ENCODE measurements at regions of chr6 and their contacts with region 1.

Region 1: GRCh38 chr6:118893807-118894424 is at the start of gene ASF1A:
- DNase-seq: peak; percentile 97
- ATAC-seq: peak; percentile 85
- H3K4me3 Mint-ChIP-seq: peak within 1 kb of the TSS; percentile 84
- H3K27ac Mint-ChIP-seq: peak within 1 kb of the TSS; percentile 98
- H3K4me1 Mint-ChIP-seq: peaks cover 50% of the 10 kb centered on the region
- H3K27me3 Mint-ChIP-seq: no peaks in the 10 kb centered on the region
- total RNA-seq, gene ASF1A: 21.2 to 28.6 TPM

Region 2: GRCh38 chr6:117602151-117602898 is 1291.6 kb before region 1 on chr6 and contains the start of gene GOPC:
- CTCF ChIA-PET with region 1: no interaction called
- POLR2A ChIA-PET with region 1: no interaction called
- intact Hi-C with region 1: loop called in 1 of 2 experiments (anchors 5 kb)
- DNase-seq: peak; percentile 96
- ATAC-seq: peak; percentile 94
- H3K4me3 Mint-ChIP-seq: peak within 1 kb of the TSS; percentile 99
- H3K27ac Mint-ChIP-seq: peak within 1 kb of the TSS; percentile 99
- H3K4me1 Mint-ChIP-seq: peaks cover 30% of the 10 kb centered on the region
- H3K27me3 Mint-ChIP-seq: peaks cover 2% of the 10 kb centered on the region
- total RNA-seq, gene GOPC: 13.3 to 15.5 TPM

Region 3: DNA sequence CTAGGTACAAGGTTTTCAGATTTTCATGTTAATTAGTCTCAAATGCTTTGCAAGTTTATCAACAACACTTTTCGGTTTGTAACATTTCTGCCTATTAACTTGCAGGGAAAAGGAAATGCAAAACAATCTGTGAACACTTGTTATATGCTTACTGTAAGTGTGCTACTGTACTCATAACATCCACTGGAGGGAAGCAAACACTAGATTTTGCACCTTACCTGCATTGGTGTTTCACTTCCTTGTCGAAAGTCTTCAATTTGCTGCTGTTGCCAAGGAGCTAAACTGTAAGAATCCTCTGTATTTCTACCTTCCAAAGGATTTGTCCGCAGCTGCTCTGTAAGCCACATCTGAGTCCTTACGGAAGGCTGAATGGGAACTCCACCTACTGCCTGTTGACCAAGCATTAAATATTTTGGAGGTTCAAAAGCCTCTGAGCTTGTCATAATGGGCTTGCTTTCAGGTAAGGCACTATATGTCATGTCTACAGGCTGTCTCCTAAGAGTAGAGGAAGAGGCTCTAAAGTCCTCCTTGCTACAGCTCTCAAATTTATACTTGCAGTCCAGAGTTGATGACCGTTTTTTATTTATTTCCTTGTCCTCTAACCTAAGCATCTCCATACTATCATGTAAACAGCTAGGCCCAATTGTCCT is 328.5 kb before region 1 on chr6:
- CTCF ChIA-PET with region 1: interaction called, 4 read pairs
- POLR2A ChIA-PET with region 1: no interaction called
- intact Hi-C with region 1: loop called (anchors 5 to 10 kb)
- DNase-seq: no peak
- ATAC-seq: peak; percentile 92
- H3K4me3 Mint-ChIP-seq: no peak overlapping the region
- H3K27ac Mint-ChIP-seq: no peak overlapping the region
- H3K4me1 Mint-ChIP-seq: peaks cover 20% of the 10 kb centered on the region
- H3K27me3 Mint-ChIP-seq: no peaks in the 10 kb centered on the region

Region 4: GRCh38 chr6:118724211-118724610 is 169.7 kb before region 1 on chr6:
- CTCF ChIA-PET with region 1: interaction called, 3 read pairs
- POLR2A ChIA-PET with region 1: no interaction called
- intact Hi-C with region 1: loop called in 1 of 2 experiments (anchors 5 kb)
- DNase-seq: no peak
- ATAC-seq: peak; percentile 37
- H3K4me3 Mint-ChIP-seq: no peak overlapping the region
- H3K27ac Mint-ChIP-seq: peak overlapping the region; percentile 70
- H3K4me1 Mint-ChIP-seq: peaks cover 75% of the 10 kb centered on the region
- H3K27me3 Mint-ChIP-seq: no peaks in the 10 kb centered on the region

Region 5: GRCh38 chr6:118882314-118882905 is 11.5 kb before region 1 on chr6:
- CTCF ChIA-PET with region 1: interaction called, 10 read pairs
- POLR2A ChIA-PET with region 1: no interaction called
- intact Hi-C with region 1: no loop called
- DNase-seq: no peak
- ATAC-seq: peak; percentile 53
- H3K4me3 Mint-ChIP-seq: no peak overlapping the region
- H3K27ac Mint-ChIP-seq: peak overlapping the region; percentile 1
- H3K4me1 Mint-ChIP-seq: peaks cover 73% of the 10 kb centered on the region
- H3K27me3 Mint-ChIP-seq: no peaks in the 10 kb centered on the region

Region 6: DNA sequence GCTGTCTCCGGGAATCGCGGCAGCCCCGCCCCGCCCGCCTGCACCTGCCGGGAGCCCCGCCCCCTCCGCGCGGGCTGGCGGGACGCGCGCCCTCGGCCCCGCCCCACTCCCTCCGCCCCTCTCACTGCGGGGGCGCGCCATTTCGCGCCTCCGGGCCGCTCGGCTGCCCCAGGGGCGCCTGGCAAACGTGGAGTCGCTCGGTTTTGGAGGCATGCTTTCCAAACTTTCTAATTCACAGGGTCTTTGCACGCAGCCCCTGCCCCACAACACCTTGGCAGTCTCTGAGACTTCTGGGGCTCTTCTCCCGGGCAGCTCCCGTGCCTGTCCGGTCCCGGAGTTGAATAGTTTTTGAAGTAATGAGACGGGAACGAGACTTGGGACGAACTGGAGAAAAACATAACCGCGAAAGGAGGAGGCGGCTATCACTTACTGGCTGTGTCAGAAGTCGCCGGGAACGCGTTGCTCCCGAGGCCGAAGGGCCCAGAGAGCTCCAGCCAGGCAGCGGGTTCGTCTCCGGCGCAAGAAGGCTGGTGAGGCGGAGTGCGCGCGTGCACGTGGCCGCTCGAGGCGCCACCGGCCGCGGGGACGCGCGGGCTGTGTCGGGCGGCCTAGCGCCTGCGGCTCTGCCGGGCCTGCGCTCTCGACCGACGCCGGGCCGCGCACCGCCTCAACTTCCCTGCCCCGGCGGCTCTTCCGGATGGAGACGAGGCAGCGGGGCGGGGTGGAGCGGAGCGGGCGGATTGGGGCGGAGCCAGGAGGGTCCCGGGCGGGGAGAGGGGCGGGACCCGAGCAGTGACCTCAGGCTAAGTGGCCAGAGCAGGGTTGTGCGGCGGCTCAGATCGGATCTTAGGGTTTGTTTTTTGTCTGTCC is 40.8 kb after region 1 on chr6 and contains the start of gene MCM9:
- CTCF ChIA-PET with region 1: interaction called, 4 read pairs
- POLR2A ChIA-PET with region 1: no interaction called
- intact Hi-C with region 1: loop called (anchors 1 kb)
- DNase-seq: peak; percentile 94
- ATAC-seq: peak; percentile 97
- H3K4me3 Mint-ChIP-seq: peak within 1 kb of the TSS; percentile 87
- H3K27ac Mint-ChIP-seq: peak within 1 kb of the TSS; percentile 94
- H3K4me1 Mint-ChIP-seq: peaks cover 35% of the 10 kb centered on the region
- H3K27me3 Mint-ChIP-seq: no peaks in the 10 kb centered on the region
- total RNA-seq, gene MCM9: 17.0 to 17.2 TPM

Region 7: GRCh38 chr6:119349323-119350042 is 455.6 kb after region 1 on chr6 and contains the start of gene MAN1A1:
- CTCF ChIA-PET with region 1: no interaction called
- POLR2A ChIA-PET with region 1: no interaction called
- intact Hi-C with region 1: loop called (anchors 1 to 10 kb)
- DNase-seq: peak; percentile 93
- ATAC-seq: peak; percentile 87
- H3K4me3 Mint-ChIP-seq: peak within 1 kb of the TSS; percentile 84
- H3K27ac Mint-ChIP-seq: peak within 1 kb of the TSS; percentile 95
- H3K4me1 Mint-ChIP-seq: peaks cover 39% of the 10 kb centered on the region
- H3K27me3 Mint-ChIP-seq: no peaks in the 10 kb centered on the region
- total RNA-seq, gene MAN1A1: 15.3 to 18.4 TPM